Mucosa of descending colon (tissue), 3 donors: ENCODE measurements at regions of chr6 and their contacts with region 1.

Region 1: GRCh38 chr6:111259089-111259831 is 172.0 kb downstream of the SLC16A10 start:
- DNase-seq: peak; percentile 99 to 100 (median 99)
- ATAC-seq: peak; percentile 100
- H3K4me3 ChIP-seq: peak overlapping the region; percentile 33
- H3K4me1 ChIP-seq: peaks cover 12% of the 10 kb centered on the region
- CTCF ChIP-seq: peak; percentile 96

Region 2: DNA sequence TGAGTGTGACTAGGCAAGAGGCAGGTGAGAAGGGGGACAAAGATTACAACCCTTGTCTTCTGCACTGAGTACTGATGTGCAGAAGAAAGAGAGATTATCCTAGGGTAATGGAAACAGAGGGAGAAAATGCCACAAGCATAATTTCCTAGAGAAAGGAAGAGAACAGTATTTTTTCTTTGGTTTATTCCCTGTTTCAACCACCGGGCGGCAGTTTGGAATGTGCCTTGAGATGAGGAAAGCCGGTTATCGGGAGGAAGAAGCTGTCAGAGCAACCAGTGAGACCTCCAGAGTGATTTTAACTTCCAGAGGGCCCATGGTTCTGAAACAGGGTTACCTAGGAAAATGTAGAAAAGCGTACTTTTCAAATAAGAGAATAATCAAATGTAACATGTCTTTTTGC is 102.4 kb after region 1 on chr6:
- intact Hi-C with region 1: no loop called
- DNase-seq: peak in 1 of 3 donors; percentile 37
- ATAC-seq: no peak
- H3K4me3 ChIP-seq: no peak overlapping the region
- H3K4me1 ChIP-seq: no peaks in the 10 kb centered on the region
- CTCF ChIP-seq: no peak

Region 3: GRCh38 chr6:111478749-111479148 is 219.5 kb after region 1 on chr6:
- intact Hi-C with region 1: loop called in 1 of 2 experiments (anchors 10 kb)
- DNase-seq: no peak
- ATAC-seq: no peak
- H3K4me3 ChIP-seq: no peak overlapping the region
- H3K4me1 ChIP-seq: peaks cover 7% of the 10 kb centered on the region
- CTCF ChIP-seq: no peak